Calu3 (cell line): ENCODE measurements at regions of chr1 and their contacts with region 1.

Region 1: GRCh38 chr1:12619792-12620487 is 1.9 kb upstream of the DHRS3 start:
- DNase-seq: peak; percentile 79
- H3K4me3 Mint-ChIP-seq: peak overlapping the region; percentile 92
- H3K27ac Mint-ChIP-seq: peak overlapping the region; percentile 96
- H3K4me1 Mint-ChIP-seq: peaks cover 5% of the 10 kb centered on the region
- H3K27me3 Mint-ChIP-seq: no peaks in the 10 kb centered on the region
- CTCF ChIP-seq: peak; percentile 84

Region 2: DNA sequence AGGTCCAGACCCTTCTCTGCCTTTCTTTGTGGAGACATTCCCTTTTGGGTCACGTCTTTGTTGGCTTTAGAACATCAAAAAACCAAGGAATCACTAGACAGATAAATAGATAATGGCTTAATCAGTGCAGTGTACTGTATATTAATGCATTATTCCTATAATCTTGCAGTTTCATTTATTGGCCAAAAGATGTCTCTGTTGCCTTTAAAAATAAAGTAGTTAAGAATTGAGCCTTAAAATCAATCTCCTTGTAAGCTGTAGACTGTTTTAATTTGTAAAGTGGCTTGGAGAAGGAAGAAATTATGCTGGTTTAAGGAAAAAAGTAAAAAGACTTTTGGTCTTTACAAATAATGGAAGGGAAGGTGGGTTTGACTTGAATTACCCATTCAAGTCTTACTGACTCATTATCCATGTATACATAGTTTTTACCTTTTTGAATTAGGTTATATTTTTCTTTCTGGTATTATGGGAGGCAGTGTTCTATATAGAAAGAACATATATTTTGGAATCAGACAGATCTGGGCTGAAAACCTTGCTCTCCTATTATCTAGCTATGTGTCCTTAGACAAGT is 305.5 kb before region 1 on chr1:
- CTCF ChIA-PET with region 1: interaction called, 4 read pairs
- intact Hi-C with region 1: loop called (anchors 1 kb)
- DNase-seq: no peak
- H3K4me3 Mint-ChIP-seq: no peak overlapping the region
- H3K27ac Mint-ChIP-seq: no peak overlapping the region
- H3K4me1 Mint-ChIP-seq: no peaks in the 10 kb centered on the region
- H3K27me3 Mint-ChIP-seq: no peaks in the 10 kb centered on the region
- CTCF ChIP-seq: no peak

Region 3: DNA sequence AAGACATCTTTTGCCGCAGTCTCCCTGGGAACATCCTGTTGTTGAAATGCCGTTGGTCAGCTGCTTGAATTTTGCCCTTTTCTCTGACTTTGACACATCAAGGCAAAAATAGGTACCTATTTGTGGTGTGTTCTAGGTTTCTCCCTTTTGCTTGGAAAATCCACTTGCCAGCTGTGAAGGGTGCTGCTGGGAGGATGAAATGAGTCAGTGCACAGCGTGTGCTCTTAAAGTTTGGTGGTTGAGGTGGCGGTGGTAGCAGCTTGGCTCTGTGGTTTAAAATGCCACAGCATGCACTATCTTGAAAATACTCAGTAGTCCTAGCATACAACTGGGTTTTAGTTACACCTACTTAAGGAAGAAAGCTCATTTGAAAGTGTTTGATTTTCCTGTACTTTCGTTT is 185.8 kb before region 1 on chr1:
- CTCF ChIA-PET with region 1: no interaction called
- intact Hi-C with region 1: loop called (anchors 5 kb)
- DNase-seq: no peak
- H3K4me3 Mint-ChIP-seq: no peak overlapping the region
- H3K27ac Mint-ChIP-seq: peak overlapping the region; percentile 89
- H3K4me1 Mint-ChIP-seq: peaks cover 46% of the 10 kb centered on the region
- H3K27me3 Mint-ChIP-seq: no peaks in the 10 kb centered on the region
- CTCF ChIP-seq: no peak

Region 4: DNA sequence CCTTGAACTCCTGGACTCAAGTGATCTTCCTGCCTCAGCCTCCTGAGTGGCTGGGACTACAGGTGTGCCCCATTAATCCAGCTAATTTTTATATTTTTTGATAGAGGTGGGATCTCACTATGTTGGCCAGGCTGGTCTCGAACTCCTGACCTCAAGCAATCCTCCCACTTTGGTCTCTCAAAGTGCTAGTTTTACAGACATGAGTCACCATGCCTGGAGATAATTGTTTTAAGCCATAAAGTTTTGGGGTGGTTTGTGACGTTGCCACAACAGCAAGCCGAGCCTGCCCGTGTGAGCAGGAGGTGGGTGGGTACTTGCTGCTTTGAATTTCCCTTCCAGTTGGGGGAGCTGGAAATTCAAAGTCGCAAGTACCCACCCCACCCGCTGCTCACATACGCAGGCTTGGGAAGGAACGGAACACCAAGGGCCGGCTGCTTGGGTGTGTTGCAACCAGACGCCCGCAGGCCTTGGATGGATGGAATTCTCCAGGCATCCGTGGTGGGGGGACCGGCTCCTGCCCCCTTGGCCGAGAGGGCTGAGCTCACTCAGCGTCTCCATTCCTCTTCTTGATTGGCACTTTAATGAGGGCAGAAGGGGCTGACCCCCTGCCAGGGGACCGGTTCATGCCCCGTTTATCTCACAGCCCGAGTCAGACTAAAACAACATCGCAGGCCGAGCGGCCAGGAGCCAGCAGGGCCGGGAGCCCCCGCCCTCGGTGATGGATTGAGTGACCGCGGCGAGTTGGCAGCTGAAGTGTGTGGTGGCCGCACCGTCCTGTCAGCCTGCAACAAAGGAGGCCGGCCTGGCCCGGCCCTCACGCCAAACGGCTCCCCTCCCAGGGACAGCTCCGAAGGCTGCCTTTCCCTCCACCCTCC is 80.0 kb before region 1 on chr1:
- CTCF ChIA-PET with region 1: no interaction called
- intact Hi-C with region 1: loop called (anchors 5 kb)
- DNase-seq: peak; percentile 78
- H3K4me3 Mint-ChIP-seq: no peak overlapping the region
- H3K27ac Mint-ChIP-seq: peak overlapping the region; percentile 15
- H3K4me1 Mint-ChIP-seq: peaks cover 47% of the 10 kb centered on the region
- H3K27me3 Mint-ChIP-seq: no peaks in the 10 kb centered on the region
- CTCF ChIP-seq: no peak

Region 5: GRCh38 chr1:12604114-12604874 is 15.6 kb before region 1 on chr1:
- CTCF ChIA-PET with region 1: interaction called, 12 read pairs
- intact Hi-C with region 1: loop called (anchors 2 kb)
- DNase-seq: peak; percentile 74
- H3K4me3 Mint-ChIP-seq: peak overlapping the region; percentile 24
- H3K27ac Mint-ChIP-seq: peak overlapping the region; percentile 93
- H3K4me1 Mint-ChIP-seq: peaks cover 55% of the 10 kb centered on the region
- H3K27me3 Mint-ChIP-seq: no peaks in the 10 kb centered on the region
- CTCF ChIP-seq: no peak